ENCODE measurements at regions of chr6 and their contacts with region 1.

Region 1: DNA sequence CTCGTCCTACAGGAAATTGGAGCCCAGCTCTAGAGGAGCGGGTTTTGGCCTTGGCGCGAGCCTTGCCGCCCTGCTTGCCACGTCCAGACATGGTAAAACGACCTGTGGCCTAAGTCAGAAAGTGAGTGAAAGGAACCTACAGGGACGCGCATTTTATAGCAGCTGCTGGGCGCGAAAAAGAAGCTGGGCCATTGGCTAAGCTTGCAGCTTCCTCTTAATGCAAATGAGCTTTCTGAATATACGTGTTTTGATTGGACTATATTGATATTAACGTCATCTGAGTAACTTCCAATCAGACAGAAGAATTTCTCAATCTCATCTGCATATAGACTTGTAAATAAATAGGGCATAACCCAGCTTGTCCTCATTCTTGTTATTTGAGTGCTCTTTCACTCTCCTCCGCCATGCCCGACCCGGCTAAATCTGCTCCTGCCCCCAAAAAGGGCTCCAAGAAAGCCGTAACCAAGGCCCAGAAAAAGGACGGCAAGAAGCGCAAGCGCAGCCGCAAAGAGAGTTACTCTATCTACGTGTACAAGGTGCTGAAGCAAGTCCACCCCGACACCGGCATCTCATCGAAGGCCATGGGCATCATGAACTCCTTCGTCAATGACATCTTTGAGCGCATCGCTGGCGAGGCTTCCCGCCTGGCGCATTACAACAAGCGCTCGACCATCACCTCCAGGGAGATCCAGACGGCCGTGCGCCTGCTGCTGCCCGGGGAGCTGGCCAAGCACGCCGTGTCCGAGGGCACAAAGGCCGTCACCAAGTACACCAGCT is 18.9 kb downstream of the OR2B2 start:
- DNase-seq: peak; percentile 93
- H3K4me3 Mint-ChIP-seq: no peak overlapping the region
- H3K27ac Mint-ChIP-seq: no peak overlapping the region
- H3K4me1 Mint-ChIP-seq: peaks cover 27% of the 10 kb centered on the region
- H3K27me3 Mint-ChIP-seq: peaks cover 2% of the 10 kb centered on the region

Region 2: DNA sequence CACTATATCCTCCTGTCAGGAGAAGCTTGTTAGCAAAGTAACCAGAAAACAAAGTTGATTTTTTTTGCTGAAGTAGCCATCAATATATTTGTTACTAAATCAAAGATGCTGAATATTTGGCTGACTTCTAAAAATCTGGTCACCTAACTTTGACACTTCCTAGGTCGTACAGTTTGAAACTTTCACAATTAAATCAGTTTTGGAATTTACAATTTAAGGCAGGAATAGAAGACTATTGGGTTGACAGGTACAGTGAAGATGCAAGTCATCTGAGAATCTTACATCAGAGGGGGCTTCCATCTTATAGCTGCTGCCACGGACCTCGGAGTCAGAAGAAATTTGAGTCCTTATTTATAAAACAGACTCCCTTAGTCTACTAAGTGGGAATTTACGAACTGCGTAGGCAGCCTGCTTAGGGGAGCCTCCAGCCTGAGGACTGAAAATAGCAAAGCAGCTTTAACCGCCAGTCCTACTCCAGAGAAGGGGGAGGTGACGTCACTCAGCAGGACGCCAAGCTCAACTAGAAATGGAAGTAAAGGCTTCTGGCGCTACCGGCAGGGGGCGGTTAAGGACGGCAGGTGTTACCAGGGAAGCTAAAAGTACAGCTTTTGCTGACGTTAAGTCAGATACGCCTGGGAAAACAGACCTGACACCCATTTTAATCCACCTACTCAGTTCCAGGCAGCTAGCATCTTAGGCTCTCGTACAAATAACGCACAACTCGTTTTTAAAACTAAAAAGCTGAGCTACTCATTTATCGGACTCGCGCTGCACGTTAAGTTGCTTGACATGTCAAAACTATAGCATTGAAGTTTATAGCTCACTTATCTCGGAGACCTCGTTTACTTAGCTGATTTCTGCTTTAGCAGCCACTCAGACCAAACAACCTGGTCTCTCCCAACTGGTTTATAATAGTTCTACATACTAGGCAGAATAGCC is 1867.1 kb before region 1 on chr6:
- CTCF ChIA-PET with region 1: no interaction called
- intact Hi-C with region 1: loop called (anchors 10 kb)
- DNase-seq: peak; percentile 98
- H3K4me3 Mint-ChIP-seq: peak overlapping the region; percentile 87
- H3K27ac Mint-ChIP-seq: peak overlapping the region; percentile 99
- H3K4me1 Mint-ChIP-seq: peaks cover 31% of the 10 kb centered on the region
- H3K27me3 Mint-ChIP-seq: no peaks in the 10 kb centered on the region

Region 3: DNA sequence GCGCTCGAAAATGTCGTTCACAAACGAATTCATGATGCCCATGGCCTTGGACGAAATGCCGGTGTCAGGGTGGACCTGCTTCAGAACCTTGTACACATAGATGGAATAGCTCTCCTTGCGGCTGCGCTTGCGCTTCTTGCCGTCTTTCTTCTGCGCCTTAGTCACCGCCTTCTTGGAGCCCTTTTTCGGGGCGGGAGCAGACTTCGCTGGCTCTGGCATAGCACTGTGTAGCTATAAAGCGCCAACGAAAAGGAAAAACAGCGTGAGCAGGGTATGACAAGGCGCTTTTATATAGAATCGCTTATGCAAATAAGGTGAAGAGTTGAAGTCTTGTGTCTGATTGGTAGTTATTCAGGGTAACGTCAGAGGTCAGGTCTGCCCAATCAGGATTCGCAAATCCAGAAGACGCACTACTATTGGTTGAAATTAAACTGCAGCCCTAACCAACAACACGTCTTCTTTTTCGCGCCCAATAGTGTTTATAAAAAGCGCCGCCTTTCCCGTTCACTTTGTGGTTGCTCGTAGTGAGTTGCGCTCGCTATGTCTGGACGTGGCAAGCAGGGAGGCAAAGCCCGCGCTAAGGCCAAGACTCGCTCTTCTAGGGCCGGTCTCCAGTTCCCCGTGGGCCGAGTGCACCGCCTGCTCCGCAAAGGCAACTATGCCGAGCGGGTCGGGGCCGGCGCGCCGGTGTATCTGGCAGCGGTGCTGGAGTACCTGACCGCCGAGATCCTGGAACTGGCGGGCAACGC is 760.5 kb before region 1 on chr6:
- CTCF ChIA-PET with region 1: no interaction called
- intact Hi-C with region 1: loop called (anchors 1 kb)
- DNase-seq: peak; percentile 94
- H3K4me3 Mint-ChIP-seq: no peak overlapping the region
- H3K27ac Mint-ChIP-seq: no peak overlapping the region
- H3K4me1 Mint-ChIP-seq: peaks cover 19% of the 10 kb centered on the region
- H3K27me3 Mint-ChIP-seq: no peaks in the 10 kb centered on the region

Region 4: GRCh38 chr6:27479319-27480182 is 413.7 kb before region 1 on chr6:
- CTCF ChIA-PET with region 1: no interaction called
- intact Hi-C with region 1: loop called (anchors 2 kb)
- DNase-seq: peak; percentile 90
- H3K4me3 Mint-ChIP-seq: no peak overlapping the region
- H3K27ac Mint-ChIP-seq: no peak overlapping the region
- H3K4me1 Mint-ChIP-seq: peaks cover 6% of the 10 kb centered on the region
- H3K27me3 Mint-ChIP-seq: no peaks in the 10 kb centered on the region

Region 5: DNA sequence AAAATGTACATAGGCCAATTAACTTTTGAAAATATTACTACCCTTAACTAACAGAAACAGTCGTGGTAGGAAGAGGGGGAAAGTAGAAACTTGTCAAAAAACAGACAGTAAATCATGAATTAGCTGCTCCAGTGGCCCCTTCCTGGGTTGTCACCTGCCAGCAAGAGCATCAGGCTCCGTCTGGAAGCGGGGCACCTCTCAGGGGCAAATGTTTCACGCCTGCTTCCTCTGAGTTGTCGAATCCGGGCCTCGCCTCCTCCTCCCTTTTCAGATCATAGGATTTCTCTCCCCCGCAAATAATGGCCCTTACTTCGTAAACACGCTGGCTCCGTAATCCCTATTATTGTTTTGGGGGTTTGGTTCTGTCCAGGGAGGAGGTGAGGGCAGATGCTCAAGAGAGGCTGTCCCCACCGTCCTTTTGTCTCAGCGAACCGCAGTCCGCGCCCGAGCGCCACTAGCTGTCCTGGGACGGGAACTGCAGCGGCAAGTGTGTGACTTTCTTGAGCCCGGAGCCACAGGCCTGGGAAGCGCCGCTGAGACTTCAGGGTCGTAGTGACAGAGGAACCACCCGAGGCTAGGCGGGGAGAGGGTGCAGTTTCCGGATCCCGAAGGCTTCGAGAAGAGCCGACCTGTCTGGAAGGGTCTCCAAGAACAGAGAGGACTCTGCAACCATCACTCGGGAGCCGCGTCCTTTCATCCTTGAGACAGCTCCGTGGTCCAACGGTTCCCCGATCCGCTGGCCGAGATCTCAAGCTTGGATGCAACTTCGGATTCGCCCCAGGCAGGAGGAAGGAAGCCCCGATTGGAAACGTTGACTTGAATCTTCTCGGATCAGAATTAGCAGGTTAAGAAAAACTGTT is 205.9 kb before region 1 on chr6:
- CTCF ChIA-PET with region 1: no interaction called
- intact Hi-C with region 1: loop called (anchors 2 kb)
- DNase-seq: peak; percentile 90
- H3K4me3 Mint-ChIP-seq: peak overlapping the region; percentile 93
- H3K27ac Mint-ChIP-seq: peak overlapping the region; percentile 94
- H3K4me1 Mint-ChIP-seq: peaks cover 18% of the 10 kb centered on the region
- H3K27me3 Mint-ChIP-seq: peaks cover 26% of the 10 kb centered on the region

Region 6: DNA sequence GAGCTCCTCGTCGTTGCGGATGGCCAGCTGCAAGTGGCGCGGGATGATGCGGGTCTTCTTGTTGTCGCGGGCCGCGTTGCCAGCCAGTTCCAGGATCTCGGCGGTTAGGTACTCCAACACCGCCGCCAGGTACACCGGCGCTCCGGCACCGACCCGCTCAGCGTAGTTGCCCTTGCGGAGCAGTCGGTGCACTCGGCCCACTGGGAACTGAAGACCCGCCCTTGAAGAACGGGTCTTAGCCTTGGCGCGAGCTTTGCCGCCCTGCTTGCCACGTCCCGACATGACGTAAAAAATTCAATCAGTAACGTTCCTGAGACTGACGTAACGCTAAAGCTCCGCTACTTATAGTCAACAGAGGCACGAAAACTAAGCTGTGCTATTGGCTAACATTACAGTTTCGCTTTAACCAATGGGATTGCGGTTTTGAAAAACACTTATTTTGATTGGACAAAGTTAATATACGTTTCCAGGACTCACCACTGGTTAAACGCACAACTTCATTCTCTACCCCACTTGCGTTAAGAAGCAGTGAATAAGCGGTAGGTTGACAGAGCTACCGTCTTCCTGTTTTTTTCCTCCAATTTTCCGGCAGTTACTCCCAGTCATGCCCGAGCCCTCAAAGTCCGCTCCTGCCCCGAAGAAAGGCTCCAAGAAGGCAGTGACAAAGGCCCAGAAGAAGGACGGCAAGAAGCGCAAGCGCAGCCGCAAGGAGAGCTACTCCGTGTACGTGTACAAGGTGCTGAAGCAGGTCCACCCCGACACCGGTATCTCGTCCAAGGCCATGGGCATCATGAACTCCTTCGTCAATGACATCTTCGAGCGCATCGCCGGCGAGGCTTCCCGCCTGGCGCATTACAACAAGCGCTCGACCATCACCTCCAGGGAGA is 54.9 kb before region 1 on chr6:
- CTCF ChIA-PET with region 1: interaction called, 6 read pairs
- intact Hi-C with region 1: loop called (anchors 1 kb)
- DNase-seq: peak; percentile 87
- H3K4me3 Mint-ChIP-seq: no peak overlapping the region
- H3K27ac Mint-ChIP-seq: no peak overlapping the region
- H3K4me1 Mint-ChIP-seq: peaks cover 26% of the 10 kb centered on the region
- H3K27me3 Mint-ChIP-seq: peaks cover 7% of the 10 kb centered on the region

Region 7: DNA sequence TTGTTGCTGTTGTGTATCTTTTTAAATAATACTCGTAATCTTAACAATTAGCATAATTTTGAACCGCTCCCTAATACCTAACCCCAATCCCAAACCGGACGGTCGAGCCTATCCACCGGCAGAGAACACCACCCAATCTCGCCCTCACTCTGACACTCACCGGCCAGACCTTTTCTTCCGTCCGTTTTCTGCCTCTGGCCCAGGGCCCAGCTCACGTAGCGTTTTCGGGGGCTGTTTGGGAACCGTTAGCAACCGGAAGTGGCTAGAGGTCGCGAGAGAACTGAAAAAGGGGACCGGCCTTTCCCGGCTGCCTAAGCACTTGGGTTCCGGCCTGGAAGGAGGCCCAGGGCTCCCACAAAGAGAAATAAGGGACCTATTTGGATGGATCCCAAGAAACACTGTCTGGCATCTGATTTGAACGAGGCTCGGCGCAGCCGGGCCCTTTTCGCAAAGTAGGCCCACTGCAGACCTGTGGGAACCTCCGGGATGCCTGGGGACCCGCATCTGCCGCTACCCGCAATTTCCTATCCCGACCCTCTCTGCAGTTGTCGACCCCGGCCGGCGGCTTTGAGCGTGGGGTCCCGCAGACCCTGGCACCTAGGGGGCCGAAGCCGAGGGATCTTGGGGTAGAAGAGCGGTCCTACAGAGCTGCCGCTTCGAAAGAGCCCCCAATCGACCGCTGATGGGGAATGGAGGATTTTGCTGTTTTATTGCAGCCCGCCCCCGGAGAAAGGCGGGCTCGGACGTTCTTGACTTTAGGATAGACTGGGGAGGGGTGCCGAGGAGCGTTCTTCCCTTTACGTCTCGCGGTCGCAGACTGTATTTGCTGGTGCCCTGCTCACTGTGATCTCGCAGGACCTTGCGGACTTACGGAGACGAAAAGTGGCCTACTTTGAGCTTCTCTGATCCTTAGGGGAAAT is 243.6 kb after region 1 on chr6:
- CTCF ChIA-PET with region 1: no interaction called
- intact Hi-C with region 1: loop called (anchors 1 kb)
- DNase-seq: peak; percentile 82
- H3K4me3 Mint-ChIP-seq: peak overlapping the region; percentile 97
- H3K27ac Mint-ChIP-seq: peak overlapping the region; percentile 99
- H3K4me1 Mint-ChIP-seq: peaks cover 63% of the 10 kb centered on the region
- H3K27me3 Mint-ChIP-seq: no peaks in the 10 kb centered on the region

Measured in activated naive CD4-positive, alpha-beta T cell treated with anti-CD3 and anti-CD28 coated beads for 36 hours (primary cell).